ENCODE measurements at regions of chr17 and their contacts with region 1.

Region 1: GRCh38 chr17:75109407-75110233 is at the start of gene ARMC7:
- DNase-seq: peak; percentile 77
- ATAC-seq: peak; percentile 81
- H3K4me3 ChIP-seq: peak within 1 kb of the TSS; percentile 69 to 87 (median 79)
- H3K27ac ChIP-seq: no peak within 1 kb of the TSS
- H3K4me1 ChIP-seq: peaks cover 51% of the 10 kb centered on the region
- H3K27me3 ChIP-seq: peaks cover 0 to 3% of the 10 kb centered on the region in 2 experiments; a peak in 1 of 5 replicates
- CTCF ChIP-seq: no peak
- EP300 ChIP-seq: no peak
- POLR2A ChIP-seq: peak; percentile 56 to 93; a peak in 3 of 4 replicates
- RAD21 ChIP-seq: peak; percentile 40; the same call in 1 of the 2 replicates
- total RNA-seq, gene ARMC7: 4.2 and 4.4 TPM in 2 replicates

Region 2: GRCh38 chr17:75069783-75070182 is 39.8 kb before region 1 on chr17:
- CTCF ChIA-PET with region 1: interaction called, 6 read pairs
- POLR2A ChIA-PET with region 1: interaction called, 6 read pairs
- in situ Hi-C with region 1: no loop called
- intact Hi-C with region 1: loop called (anchors 5 kb)
- DNase-seq: no peak
- ATAC-seq: peak; percentile 22; the same call in 1 of the 3 replicates
- H3K4me3 ChIP-seq: no peak overlapping the region
- H3K27ac ChIP-seq: no peak overlapping the region
- H3K4me1 ChIP-seq: peaks cover 36% of the 10 kb centered on the region
- H3K27me3 ChIP-seq: peaks cover 0 to 14% of the 10 kb centered on the region in 2 experiments; a peak in 3 of 5 replicates
- CTCF ChIP-seq: peak; percentile 54
- EP300 ChIP-seq: no peak
- POLR2A ChIP-seq: no peak
- RAD21 ChIP-seq: peak; percentile 52; the same call in 1 of the 2 replicates

Region 3: GRCh38 chr17:75087558-75088453 is 21.8 kb before region 1 on chr17 and contains the start of gene SLC16A5:
- CTCF ChIA-PET with region 1: interaction called, 7 read pairs
- POLR2A ChIA-PET with region 1: interaction called, 14 read pairs
- in situ Hi-C with region 1: no loop called
- intact Hi-C with region 1: no loop called
- DNase-seq: peak; percentile 91
- ATAC-seq: peak; percentile 63
- H3K4me3 ChIP-seq: peak within 1 kb of the TSS; percentile 57 to 76 (median 68)
- H3K27ac ChIP-seq: peak within 1 kb of the TSS; percentile 63
- H3K4me1 ChIP-seq: peaks cover 97% of the 10 kb centered on the region
- H3K27me3 ChIP-seq: 0 out of 5 replicates have a peak, but pooled peaks cover 0 to 11% of the 10 kb centered on the region in 2 experiments
- CTCF ChIP-seq: no peak
- EP300 ChIP-seq: peak in 1 of 2 experiments; percentile 19; a peak in 1 of 4 replicates
- POLR2A ChIP-seq: no peak; a peak in 1 of 4 replicates
- RAD21 ChIP-seq: peak; percentile 22
- total RNA-seq, gene SLC16A5: 0.42 and 0.69 TPM in 2 replicates

Region 4: DNA sequence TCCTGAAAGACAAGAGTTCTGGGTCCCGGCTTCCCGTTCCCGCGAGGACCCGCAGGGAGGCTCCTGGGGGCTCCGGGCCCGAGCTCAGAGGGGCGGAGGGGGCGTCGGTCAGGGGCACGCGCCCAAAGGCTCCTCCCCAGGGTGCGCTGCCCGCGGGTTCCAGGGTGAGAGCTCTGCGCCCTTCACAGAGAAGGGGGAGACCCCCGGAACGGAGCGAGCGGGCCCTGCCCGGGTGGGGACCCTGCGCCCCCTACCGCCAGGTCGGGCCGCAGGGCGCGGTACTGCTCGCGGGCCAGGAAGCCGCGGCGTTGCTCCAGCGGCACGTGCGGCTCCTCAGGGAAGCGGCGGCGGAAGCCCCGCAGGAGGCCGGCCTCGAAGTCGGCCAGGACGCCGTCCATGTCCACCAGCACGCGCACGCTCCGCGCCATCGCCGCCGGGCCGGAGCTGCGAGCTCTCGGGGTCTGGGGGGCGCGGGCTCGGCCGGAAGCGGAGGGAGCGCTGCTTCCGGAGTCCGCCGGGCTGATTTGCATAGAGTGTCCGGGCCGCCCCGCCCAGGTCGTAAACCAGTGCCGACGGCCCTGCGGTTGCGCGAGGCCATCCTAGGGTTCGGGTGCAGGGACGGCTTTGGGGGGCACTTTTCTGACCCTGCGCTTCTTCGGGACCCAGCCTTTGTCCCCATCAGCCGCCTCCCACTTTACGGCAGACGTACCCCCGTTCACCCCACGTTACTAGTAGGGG is 21.8 kb after region 1 on chr17 and contains the start of gene NT5C:
- CTCF ChIA-PET with region 1: interaction called, 26 read pairs
- POLR2A ChIA-PET with region 1: interaction called, 19 read pairs
- in situ Hi-C with region 1: no loop called
- intact Hi-C with region 1: no loop called
- DNase-seq: peak; percentile 79
- ATAC-seq: peak; percentile 91
- H3K4me3 ChIP-seq: peak within 1 kb of the TSS; percentile 77 to 96 (median 83)
- H3K27ac ChIP-seq: peak within 1 kb of the TSS; percentile 86
- H3K4me1 ChIP-seq: peaks cover 26% of the 10 kb centered on the region
- H3K27me3 ChIP-seq: no peaks in the 10 kb centered on the region
- CTCF ChIP-seq: peak; percentile 87
- EP300 ChIP-seq: peak in 1 of 2 experiments; percentile 13; a peak in 1 of 4 replicates
- POLR2A ChIP-seq: peak; percentile 85 to 94
- RAD21 ChIP-seq: peak; percentile 91
- total RNA-seq, gene NT5C: 31.4 and 48.6 TPM in 2 replicates

Region 5: DNA sequence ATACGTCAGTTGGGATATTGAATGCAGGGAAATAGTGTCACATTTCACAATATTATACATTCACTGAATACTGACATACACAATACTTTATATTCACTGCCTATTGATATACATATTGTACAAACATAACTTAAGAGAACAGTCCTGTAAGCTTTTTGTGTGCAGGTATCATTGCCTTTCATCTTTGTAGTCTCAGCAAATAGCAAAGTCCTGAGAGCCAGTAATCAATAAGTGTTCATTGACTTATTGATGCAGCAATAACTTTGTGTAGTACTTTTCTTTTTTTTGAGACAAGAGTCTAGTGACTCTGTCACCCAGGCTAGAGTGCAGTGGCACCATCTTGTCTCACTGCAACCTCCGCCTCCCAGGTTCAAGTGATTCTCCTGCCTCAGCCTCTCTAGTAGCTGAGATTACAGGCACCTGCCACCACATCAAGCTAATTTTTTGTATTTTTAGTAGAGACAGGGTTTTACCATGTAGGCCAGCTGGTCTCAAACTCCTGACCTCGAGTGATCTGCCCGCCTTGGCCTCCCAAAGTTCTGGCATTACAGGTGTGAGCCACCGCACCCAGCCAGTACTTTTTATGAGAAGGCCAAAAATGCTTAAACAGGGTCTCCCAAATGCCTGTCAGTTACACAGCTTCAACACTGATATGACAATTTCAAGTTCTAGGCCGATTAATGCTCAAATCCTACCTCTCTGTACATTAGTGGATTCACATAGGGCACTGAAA is 90.4 kb after region 1 on chr17:
- CTCF ChIA-PET with region 1: interaction called, 10 read pairs
- POLR2A ChIA-PET with region 1: interaction called, 15 read pairs
- in situ Hi-C with region 1: no loop called
- intact Hi-C with region 1: loop called (anchors 1 kb)
- DNase-seq: peak; percentile 53
- ATAC-seq: peak; percentile 30
- H3K4me3 ChIP-seq: peak overlapping the region in 1 of 3 experiments; percentile 59; a peak in 2 of 6 replicates
- H3K27ac ChIP-seq: peak overlapping the region; percentile 62
- H3K4me1 ChIP-seq: peaks cover 43% of the 10 kb centered on the region
- H3K27me3 ChIP-seq: no peaks in the 10 kb centered on the region
- CTCF ChIP-seq: no peak
- EP300 ChIP-seq: peak in 1 of 2 experiments; percentile 81; a peak in 1 of 4 replicates
- POLR2A ChIP-seq: no peak
- RAD21 ChIP-seq: no peak

Region 6: DNA sequence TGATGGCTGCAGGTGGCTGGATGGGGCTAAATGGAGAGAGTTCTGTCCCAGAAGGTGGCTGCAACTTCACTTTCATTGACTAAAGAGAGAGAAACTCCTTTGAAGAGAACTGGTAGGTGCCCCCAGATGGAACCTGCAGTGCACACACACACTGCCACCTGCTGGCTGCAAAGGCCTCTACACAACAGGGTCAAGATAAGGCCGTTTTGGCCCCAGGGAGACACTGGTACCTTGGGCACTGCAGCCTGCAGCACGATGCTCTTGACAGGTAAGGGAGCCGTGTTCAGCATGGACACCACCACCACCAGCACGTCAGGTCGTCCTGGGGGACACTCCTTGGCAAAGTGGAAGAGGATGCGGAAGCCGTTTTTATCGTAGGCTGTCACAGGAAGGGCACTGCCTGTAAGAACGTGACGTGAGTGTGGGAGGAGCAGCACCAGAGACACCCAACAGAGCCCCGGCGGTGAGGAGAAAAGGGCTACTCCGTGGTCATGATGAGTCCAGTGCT is 129.1 kb after region 1 on chr17:
- CTCF ChIA-PET with region 1: interaction called, 22 read pairs
- POLR2A ChIA-PET with region 1: interaction called, 4 read pairs
- in situ Hi-C with region 1: no loop called
- intact Hi-C with region 1: loop called (anchors 5 kb)
- DNase-seq: peak; percentile 74
- ATAC-seq: peak; percentile 83
- H3K4me3 ChIP-seq: no peak overlapping the region
- H3K27ac ChIP-seq: no peak overlapping the region
- H3K4me1 ChIP-seq: no peaks in the 10 kb centered on the region
- H3K27me3 ChIP-seq: no peaks in the 10 kb centered on the region
- CTCF ChIP-seq: peak; percentile 97
- EP300 ChIP-seq: no peak
- POLR2A ChIP-seq: no peak; a peak in 2 of 4 replicates
- RAD21 ChIP-seq: peak; percentile 54